ENCODE measurements at regions of chr1 and their contacts with region 1.

Region 1: GRCh38 chr1:99662581-99663208 is 16.8 kb downstream of the PALMD start:
- DNase-seq: peak; percentile 87 to 95
- H3K4me3 ChIP-seq: no peak overlapping the region
- CTCF ChIP-seq: no peak
- POLR2A ChIP-seq: no peak

Region 2: GRCh38 chr1:99580451-99580850 is 82.2 kb before region 1 on chr1:
- intact Hi-C with region 1: loop called (anchors 10 kb)
- DNase-seq: peak; percentile 74 to 88
- H3K4me3 ChIP-seq: no peak overlapping the region
- CTCF ChIP-seq: no peak
- POLR2A ChIP-seq: no peak

Region 3: DNA sequence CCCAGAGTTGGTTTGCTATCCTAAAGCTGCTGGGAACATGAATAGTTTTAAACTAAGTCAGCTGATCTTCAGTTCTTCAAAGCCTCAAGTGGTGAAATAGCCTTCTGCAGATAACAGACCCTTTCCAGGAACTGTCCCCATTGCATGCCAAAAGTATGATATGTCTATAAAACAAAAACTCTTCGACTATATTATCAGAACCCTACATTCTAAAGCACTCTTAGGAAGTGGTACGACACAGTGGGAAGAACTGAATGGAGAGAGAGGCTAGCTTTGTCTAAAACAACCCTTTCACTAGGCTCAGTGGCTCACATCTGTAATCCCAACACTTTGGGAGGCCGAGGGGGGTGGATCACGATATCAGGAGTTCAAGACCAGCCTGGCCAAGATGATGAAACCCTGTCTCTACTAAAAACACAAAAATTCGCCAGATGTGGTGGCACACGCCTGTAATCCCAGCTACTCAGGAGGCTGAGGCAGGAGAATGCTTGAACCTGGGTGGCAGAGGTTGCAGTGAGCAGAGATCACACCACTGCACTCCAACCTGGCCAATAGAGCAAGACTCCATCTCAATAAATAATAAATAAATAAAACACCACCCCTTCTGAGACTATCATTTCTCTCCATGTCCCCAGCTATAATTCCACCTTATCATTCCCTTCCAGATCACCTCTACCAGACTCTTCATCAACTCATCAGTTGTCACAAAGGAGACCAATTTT is 106.0 kb after region 1 on chr1:
- intact Hi-C with region 1: no loop called
- DNase-seq: no peak
- H3K4me3 ChIP-seq: no peak overlapping the region
- CTCF ChIP-seq: no peak
- POLR2A ChIP-seq: no peak

Measured in lower leg skin (tissue), 4 donors.